Astrocyte of the cerebellum (primary cell): ENCODE measurements at regions of chr11 and their contacts with region 1.

Region 1: DNA sequence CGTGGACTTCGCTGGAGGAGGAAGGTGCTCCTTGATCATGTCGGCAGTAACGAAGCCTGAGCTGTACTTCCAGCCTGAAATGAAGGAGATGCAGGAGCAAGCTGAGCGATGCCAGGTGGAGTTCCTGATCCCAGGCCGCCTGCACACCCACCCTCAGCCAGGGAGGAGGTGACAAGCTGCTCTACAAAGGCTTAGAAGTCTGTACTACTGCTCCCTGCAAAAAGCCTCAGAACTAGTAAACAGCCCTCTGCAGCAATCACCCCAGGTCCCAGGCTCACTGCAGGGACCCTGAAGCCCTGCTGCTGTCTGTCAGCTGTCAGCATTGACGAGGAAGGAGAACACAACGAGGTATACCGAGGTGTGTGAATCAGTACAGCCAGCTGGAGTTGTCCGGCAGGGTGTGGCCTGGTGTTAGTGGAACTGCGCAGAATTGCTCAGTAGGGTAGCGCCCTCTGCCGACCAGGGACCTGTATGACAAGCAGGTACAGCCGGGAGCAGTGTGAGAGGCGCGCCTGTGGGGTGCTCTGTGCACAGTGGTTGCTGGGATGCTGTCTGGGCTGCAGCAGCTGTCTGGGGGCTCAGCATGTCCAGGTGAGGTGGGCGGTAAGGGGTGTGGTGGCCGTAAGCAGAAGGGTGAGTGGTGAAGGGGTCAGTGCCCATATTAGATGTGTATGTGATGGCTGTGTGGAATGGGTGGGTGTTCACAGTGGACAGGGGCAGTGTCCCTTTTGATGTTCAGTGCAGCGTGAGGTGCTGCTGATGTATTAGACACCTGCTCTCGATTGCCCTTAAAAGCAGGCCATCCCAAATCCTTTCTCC is 7.6 kb downstream of the CYB5R2 start:
- DNase-seq: no peak
- H3K4me3 ChIP-seq: no peak overlapping the region
- CTCF ChIP-seq: peak; percentile 67

Region 2: DNA sequence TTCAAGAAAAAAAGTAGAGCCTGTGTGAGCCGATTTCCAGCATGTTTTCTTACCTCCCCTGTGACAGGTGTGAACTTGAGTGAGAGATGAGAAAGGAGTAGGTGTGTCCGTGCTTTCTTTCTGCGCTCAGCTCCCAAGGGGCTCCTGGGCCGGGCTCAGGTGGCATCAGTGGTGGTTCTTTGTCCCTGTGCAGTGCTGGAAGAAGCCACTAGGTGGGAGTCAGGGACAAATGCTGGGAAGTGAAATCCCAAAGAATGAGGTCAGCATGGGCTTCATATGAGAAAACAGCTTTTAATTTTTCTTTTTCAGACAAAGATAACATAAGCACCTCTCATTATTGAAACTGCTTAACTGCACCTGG is 94.1 kb before region 1 on chr11:
- in situ Hi-C with region 1: loop called (anchors 25 kb)
- DNase-seq: peak; percentile 34
- H3K4me3 ChIP-seq: no peak overlapping the region
- CTCF ChIP-seq: peak; percentile 99

Region 3: DNA sequence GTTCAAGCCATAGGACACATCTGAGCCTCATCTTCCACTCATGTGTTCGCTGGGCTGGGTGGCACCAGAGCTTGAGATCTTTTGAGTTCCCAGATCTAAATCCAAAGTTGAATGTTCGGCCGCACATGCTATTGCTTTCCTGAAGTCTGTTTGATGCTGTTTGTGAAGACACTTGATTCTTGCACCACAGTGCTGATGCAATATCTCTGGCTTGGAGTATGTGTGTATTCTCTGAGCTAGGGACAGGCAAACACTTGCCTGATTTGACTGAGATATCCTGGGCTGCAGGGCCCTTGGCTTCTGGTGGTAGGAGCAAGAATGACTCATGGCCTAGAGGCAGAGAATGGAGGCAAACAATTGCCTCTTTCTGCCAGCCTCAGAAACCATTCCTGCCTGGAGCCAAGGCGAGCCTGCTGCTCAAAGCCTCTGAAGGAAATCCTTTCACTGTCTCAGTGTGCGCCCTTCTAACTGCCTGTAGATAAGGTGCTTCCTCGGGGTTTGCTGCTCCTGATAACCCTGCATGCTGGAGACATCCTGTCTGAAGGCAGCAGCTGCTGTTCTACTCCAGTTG is 65.4 kb before region 1 on chr11:
- in situ Hi-C with region 1: no loop called
- DNase-seq: no peak
- H3K4me3 ChIP-seq: no peak overlapping the region
- CTCF ChIP-seq: no peak